Mammary epithelial cell (primary cell): ENCODE measurements at regions of chr17 and their contacts with region 1.

Region 1: GRCh38 chr17:70552230-70552981 is 383.1 kb downstream of the KCNJ2 start:
- DNase-seq: peak; percentile 18
- H3K4me3 ChIP-seq: no peak overlapping the region
- H3K27ac ChIP-seq: no peak overlapping the region
- H3K4me1 ChIP-seq: no peaks in the 10 kb centered on the region
- H3K27me3 ChIP-seq: no peaks in the 10 kb centered on the region
- CTCF ChIP-seq: peak; percentile 18 to 52

Region 2: GRCh38 chr17:69567130-69567529 is 985.3 kb before region 1 on chr17:
- CTCF ChIA-PET with region 1: interaction called, 3 read pairs
- dilution Hi-C with region 1: no loop called
- in situ Hi-C with region 1: loop called in 1 of 2 experiments (anchors 10 kb)
- intact Hi-C with region 1: loop called (anchors 10 kb)
- DNase-seq: no peak
- H3K4me3 ChIP-seq: no peak overlapping the region
- H3K27ac ChIP-seq: no peak overlapping the region
- H3K4me1 ChIP-seq: no peaks in the 10 kb centered on the region
- H3K27me3 ChIP-seq: no peaks in the 10 kb centered on the region
- CTCF ChIP-seq: no peak

Region 3: GRCh38 chr17:70100983-70101382 is 451.4 kb before region 1 on chr17:
- CTCF ChIA-PET with region 1: interaction called, 11 read pairs
- dilution Hi-C with region 1: no loop called
- in situ Hi-C with region 1: no loop called
- intact Hi-C with region 1: no loop called
- DNase-seq: no peak
- H3K4me3 ChIP-seq: no peak overlapping the region
- H3K27ac ChIP-seq: no peak overlapping the region
- H3K4me1 ChIP-seq: no peaks in the 10 kb centered on the region
- H3K27me3 ChIP-seq: no peaks in the 10 kb centered on the region
- CTCF ChIP-seq: peak; percentile 7 to 28